Posterior vena cava (tissue), 2 donors: ENCODE measurements at regions of chr14 and their contacts with region 1.

Region 1: DNA sequence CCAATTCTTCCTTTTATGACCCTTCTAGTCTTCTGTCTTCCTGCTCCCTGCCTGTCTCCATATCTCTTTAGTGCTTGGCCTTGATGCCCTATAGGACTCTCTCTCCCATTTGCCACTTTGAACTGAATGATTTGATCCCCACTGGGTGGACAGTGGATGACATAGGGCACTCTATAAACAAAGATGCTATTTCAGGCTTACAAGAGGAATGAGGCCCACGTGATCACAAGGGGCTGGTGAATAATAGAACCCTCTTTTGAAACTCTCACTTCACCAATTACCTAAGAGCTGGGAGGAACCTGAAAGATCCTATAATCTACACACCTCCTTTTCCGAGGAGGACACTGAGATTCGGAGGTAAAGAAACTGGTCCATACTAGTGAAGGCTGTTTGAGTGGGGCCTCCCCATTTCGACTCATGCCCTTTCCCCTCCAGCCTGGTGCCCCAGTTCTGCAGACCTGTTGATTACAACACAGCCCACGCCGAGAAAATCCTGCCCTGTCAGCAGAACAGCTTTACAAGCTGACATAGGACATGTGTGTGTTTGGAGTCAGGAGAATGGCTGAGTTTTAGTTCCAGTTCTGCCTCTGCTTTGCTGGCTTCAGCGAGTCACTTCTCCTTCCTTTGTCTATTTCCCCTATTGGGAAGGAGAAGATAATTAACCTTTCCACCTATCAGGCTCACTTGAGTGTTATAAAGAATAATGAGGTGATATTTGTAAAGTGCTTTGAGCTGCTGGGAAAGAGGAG is 400.3 kb downstream of the ZFP36L1 start:
- DNase-seq: peak; percentile 85

Region 2: DNA sequence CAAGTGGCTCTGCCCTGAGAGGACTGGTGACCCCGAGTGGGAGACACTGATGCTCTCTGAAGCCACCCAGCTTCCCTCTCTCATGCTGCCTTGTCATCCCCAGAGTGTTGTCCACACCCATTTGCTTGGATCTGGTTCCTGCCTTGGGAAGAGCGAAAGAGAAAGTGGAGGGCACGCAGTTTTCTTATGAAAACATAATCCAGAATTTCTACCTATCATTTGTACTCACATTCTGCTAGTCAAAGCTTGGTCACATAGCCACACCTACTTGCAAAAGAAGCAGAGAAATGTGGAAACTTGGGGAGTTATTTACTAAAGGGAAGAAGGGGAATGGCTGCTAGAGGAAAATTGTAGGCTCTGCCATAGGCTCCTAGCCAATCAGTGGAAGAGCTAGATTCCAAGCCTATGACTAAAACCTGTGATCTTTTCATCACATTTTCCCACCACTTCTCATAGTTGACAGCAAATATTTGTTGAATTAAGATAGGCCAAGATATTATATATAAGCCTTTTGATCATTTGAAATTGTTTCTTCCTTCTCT is 74.0 kb after region 1 on chr14:
- intact Hi-C with region 1: loop called (anchors 10 kb)
- DNase-seq: no peak

Region 3: GRCh38 chr14:68535404-68536017 is 142.9 kb after region 1 on chr14:
- intact Hi-C with region 1: loop called in 1 of 2 experiments (anchors 5 kb)
- DNase-seq: no peak

Region 4: DNA sequence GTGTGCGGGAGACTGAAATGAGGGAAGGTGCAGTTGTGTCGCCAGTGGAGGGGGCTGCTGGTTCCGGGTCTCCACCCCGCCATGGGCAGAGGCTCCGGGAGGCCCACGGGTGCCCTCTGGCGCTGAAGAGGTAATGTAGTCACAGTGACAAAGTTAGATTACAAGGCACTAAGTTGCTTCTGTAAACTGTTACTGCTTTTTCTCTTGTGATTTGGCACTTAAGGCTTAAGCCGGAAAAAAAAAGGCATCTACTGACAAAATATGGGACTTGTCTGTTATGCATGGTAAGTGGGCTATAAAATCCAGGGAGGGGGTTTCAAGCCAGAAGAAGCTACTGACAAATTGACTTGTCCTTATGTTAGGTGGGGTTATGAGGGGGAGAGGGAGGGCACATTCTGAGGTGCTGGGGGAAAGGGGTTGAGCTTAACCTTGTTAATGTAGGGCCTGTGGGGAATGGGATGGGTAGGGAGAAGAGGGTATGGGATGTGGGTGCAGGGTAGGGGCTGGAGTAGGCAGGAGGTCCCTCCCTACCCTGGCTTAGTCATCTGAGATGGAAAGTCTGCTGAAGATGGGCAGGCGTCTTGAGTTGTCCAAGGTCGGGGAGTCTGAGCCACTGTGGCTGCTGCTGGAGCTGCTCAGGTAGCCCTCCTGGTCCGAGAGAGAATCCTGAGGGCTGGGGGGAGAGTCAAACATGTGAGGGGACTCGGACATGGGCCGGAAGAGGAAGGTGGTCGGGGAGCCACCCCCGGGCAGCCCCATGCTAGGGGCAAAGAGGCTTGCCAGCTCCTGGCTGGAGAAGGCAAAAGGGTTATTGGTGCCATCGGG is 396.6 kb after region 1 on chr14:
- intact Hi-C with region 1: loop called in 1 of 2 experiments (anchors 10 kb)
- DNase-seq: peak; percentile 93